ENCODE measurements at regions of chr1 and their contacts with region 1.

Region 1: GRCh38 chr1:151762941-151763921 is at the start of gene MRPL9:
- DNase-seq: peak; percentile 87
- H3K4me3 ChIP-seq: peak within 1 kb of the TSS; percentile 92
- H3K27ac ChIP-seq: peak within 1 kb of the TSS; percentile 59
- H3K4me1 ChIP-seq: peaks cover 19% of the 10 kb centered on the region
- CTCF ChIP-seq: no peak
- total RNA-seq, gene MRPL9: 98.6 and 101 TPM in 2 replicates

Region 2: DNA sequence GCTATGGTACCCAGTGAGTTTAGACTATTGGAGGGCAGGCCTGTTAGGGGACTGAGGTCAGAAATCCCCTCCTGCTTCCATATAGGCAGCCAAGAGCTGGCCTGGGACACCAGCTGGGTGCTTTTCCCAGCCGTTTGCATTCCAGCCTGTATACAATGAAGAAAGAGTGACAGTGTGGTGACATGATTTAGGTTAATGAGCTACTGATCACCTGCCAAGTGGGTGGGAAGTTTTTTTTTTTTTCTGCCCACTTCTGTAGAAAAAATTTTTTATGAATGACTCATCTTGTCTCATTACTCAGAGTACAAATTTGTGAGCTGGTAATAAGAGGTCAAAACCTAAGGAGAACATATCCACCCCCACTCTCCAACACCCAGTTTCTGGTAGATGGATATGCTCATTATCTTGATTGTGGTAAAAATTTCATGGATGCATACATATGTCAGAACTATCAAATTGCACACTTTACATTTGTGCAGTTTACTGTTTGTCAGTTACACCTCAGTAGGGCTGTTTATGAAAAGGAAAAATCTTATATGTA is 268.4 kb before region 1 on chr1:
- CTCF ChIA-PET with region 1: no interaction called
- POLR2A ChIA-PET with region 1: no interaction called
- intact Hi-C with region 1: no loop called
- DNase-seq: no peak
- H3K4me3 ChIP-seq: no peak overlapping the region
- H3K27ac ChIP-seq: no peak overlapping the region
- H3K4me1 ChIP-seq: no peaks in the 10 kb centered on the region
- CTCF ChIP-seq: no peak

Region 3: GRCh38 chr1:151773702-151774101 is 10.5 kb after region 1 on chr1:
- CTCF ChIA-PET with region 1: no interaction called
- POLR2A ChIA-PET with region 1: interaction called, 13 read pairs
- intact Hi-C with region 1: no loop called
- DNase-seq: no peak
- H3K4me3 ChIP-seq: no peak overlapping the region
- H3K27ac ChIP-seq: no peak overlapping the region
- H3K4me1 ChIP-seq: no peaks in the 10 kb centered on the region
- CTCF ChIP-seq: no peak

Measured in OCI-LY7 (cell line).